ENCODE measurements at regions of chr7 and their contacts with region 1.

Region 1: GRCh38 chr7:36048141-36048901 is 104.7 kb upstream of the EEPD1 start:
- DNase-seq: peak; percentile 83
- ATAC-seq: peak; percentile 77
- H3K4me3 ChIP-seq: no peak overlapping the region
- H3K27ac ChIP-seq: no peak overlapping the region; the same call in 1 of the 2 replicates
- H3K4me1 ChIP-seq: peaks cover 22% of the 10 kb centered on the region
- H3K27me3 ChIP-seq: no peaks in the 10 kb centered on the region
- CTCF ChIP-seq: no peak
- POLR2A ChIP-seq: no peak
- RAD21 ChIP-seq: no peak

Region 2: DNA sequence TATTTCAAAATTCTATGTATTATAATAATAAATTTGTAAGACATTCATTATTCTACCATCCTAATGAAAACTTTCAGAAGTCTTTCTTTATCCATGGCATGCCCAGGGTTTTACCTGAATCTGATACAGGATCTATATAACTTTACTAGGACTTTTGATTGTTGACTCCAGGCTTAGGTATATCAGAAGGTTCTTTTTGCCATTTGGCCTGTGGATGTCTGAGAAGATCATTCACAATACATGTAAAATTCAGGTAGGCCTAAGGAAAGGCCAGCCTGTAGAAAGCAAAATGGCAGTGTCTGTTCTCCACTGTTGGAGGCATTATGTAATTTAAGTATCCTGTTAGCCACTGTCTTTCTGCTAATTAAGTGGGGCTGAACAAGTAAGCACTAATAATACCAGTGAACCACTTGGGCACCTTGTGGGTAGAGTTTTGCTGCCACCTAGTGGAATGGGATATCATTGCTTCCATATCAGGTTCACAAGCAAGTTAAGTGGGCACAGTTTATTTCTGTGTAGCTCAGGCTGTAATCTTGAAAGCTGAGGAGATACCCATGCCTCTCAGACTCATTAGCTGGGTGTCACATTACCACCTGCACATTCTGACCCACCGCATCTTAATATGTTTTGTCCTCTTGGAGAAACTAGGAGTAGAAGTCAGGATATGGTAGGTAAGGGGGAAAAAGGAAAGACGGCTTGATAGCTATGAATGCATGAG is 142.0 kb before region 1 on chr7:
- CTCF ChIA-PET with region 1: no interaction called
- POLR2A ChIA-PET with region 1: no interaction called
- dilution Hi-C with region 1: no loop called
- in situ Hi-C with region 1: no loop called
- intact Hi-C with region 1: no loop called
- DNase-seq: peak; percentile 81
- ATAC-seq: peak; percentile 90
- H3K4me3 ChIP-seq: no peak overlapping the region
- H3K27ac ChIP-seq: no peak overlapping the region
- H3K4me1 ChIP-seq: peaks cover 2% of the 10 kb centered on the region; the same call in 1 of the 2 replicates
- H3K27me3 ChIP-seq: no peaks in the 10 kb centered on the region
- CTCF ChIP-seq: peak; percentile 87
- POLR2A ChIP-seq: peak; percentile 40; the same call in 1 of the 2 replicates
- RAD21 ChIP-seq: peak; percentile 88

Region 3: GRCh38 chr7:36071605-36072004 is 23.3 kb after region 1 on chr7:
- CTCF ChIA-PET with region 1: no interaction called
- POLR2A ChIA-PET with region 1: no interaction called
- dilution Hi-C with region 1: no loop called
- in situ Hi-C with region 1: no loop called
- intact Hi-C with region 1: loop called (anchors 1 kb)
- DNase-seq: no peak
- ATAC-seq: no peak
- H3K4me3 ChIP-seq: no peak overlapping the region
- H3K27ac ChIP-seq: no peak overlapping the region
- H3K4me1 ChIP-seq: no peaks in the 10 kb centered on the region
- H3K27me3 ChIP-seq: peaks cover 33% of the 10 kb centered on the region
- CTCF ChIP-seq: no peak
- POLR2A ChIP-seq: no peak
- RAD21 ChIP-seq: no peak

Region 4: DNA sequence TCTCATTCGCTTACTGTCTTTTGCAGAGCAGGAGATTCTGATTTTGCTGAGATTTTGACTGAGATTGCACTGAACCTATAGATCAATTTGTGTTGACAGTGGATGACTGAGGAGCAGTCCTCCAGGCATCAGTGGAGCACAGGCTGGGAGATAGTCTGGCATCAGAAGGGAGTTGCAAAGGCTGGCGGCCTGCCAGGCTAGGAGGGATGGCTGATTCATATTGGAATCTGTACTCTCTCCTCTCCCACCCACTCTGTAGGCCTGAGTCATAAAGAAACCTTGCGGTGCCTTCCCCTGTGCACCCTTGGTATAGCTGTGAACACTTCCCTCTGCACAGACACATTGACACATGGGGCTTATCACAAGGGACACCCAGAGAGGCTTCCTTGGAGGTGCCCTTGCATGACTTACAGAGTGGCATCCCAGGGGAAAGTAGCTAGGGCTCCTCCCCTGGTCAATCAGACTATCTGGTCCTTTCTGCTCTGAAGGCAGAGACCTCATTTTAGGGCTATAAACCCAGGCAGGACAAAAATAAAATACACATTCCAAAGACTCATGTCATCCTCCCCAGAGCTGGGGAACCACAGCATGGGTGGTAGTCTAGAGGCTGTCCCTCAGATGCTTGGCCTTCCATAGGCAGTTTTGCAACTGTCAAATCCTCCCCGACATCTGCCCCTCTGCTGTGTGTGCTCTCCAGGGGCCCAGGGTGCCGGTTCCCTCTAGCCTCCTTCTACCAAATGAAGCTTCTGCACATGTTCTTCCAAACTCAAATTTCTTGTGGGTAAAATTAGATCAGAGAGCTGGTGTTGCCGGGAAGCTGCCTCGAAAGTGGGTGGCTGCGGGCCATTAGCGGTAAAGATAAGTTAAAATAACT is 67.4 kb after region 1 on chr7:
- CTCF ChIA-PET with region 1: no interaction called
- POLR2A ChIA-PET with region 1: no interaction called
- dilution Hi-C with region 1: no loop called
- in situ Hi-C with region 1: no loop called
- intact Hi-C with region 1: loop called (anchors 5 kb)
- DNase-seq: peak; percentile 97
- ATAC-seq: peak; percentile 93
- H3K4me3 ChIP-seq: no peak overlapping the region
- H3K27ac ChIP-seq: peak overlapping the region; percentile 72
- H3K4me1 ChIP-seq: peaks cover 23% of the 10 kb centered on the region
- H3K27me3 ChIP-seq: no peaks in the 10 kb centered on the region
- CTCF ChIP-seq: no peak
- POLR2A ChIP-seq: no peak
- RAD21 ChIP-seq: no peak

Measured in IMR-90 (cell line).